Sigmoid colon (tissue), 7 donors: ENCODE measurements at regions of chr5 and their contacts with region 1.

Region 1: DNA sequence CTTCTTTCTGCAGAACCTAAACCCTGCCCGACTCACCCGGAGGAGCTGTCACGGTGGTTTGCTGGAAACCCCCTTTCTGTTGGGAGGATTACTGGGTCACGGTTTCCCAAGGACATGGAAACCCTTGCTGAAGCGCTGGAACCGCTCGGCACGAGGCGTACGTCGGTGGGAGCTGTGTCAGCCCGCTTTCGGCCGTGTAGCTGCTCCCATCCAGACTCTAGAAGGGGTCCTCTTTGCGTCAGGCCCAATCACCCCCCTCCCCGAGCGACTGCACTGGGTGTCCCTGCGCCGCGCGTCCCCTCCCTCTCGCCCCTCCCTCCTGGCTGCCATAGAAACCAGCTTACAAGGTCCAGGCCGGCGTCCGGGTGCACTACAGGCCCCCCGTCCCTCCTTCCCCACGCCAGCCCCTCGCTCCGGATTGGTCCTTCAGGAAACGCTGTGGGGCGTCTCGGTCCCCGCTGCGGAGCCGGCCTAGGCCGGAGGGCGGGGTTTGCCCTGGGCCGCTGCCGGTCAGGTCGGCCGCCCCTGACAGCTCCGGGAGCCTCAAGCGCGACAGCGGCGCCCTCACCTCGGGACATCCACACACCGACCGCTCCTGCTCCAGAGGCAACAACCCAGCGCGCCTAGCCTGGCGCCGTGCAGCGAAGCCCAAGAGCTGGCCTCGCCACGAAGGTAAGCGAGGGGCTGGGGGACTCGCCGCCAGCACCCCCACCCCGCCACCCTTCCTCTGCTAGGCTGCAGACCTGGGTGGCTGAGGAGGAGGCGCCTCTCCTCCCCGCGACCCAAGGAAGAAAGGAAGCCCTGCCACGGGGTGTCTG is at the start of gene NIM1K:
- DNase-seq: peak; percentile 87
- H3K4me3 ChIP-seq: peak within 1 kb of the TSS; percentile 36 to 74 (median 59)
- H3K27ac ChIP-seq: peak within 1 kb of the TSS; percentile 58 to 62 (median 60)
- H3K4me1 ChIP-seq: peaks cover 0 to 28% (median 18%) of the 10 kb centered on the region in 4 donors
- H3K27me3 ChIP-seq: no peaks in the 10 kb centered on the region
- CTCF ChIP-seq: no peak
- EP300 ChIP-seq: no peak
- POLR2A ChIP-seq: no peak
- total RNA-seq, gene NIM1K: 0.28 to 3.6 (median 0.83) TPM

Region 2: GRCh38 chr5:43066799-43067741 is 124.9 kb before region 1 on chr5:
- intact Hi-C with region 1: loop called (anchors 5 kb)
- DNase-seq: peak; percentile 93
- H3K4me3 ChIP-seq: peak overlapping the region; percentile 65 to 91 (median 80)
- H3K27ac ChIP-seq: peak overlapping the region; percentile 94 to 100 (median 98)
- H3K4me1 ChIP-seq: peaks cover 0 to 38% (median 25%) of the 10 kb centered on the region in 4 donors
- H3K27me3 ChIP-seq: no peaks in the 10 kb centered on the region
- CTCF ChIP-seq: no peak
- EP300 ChIP-seq: no peak
- POLR2A ChIP-seq: peak; percentile 78 to 83